Calu3 (cell line): ENCODE measurements at regions of chr16 and their contacts with region 1.

Region 1: DNA sequence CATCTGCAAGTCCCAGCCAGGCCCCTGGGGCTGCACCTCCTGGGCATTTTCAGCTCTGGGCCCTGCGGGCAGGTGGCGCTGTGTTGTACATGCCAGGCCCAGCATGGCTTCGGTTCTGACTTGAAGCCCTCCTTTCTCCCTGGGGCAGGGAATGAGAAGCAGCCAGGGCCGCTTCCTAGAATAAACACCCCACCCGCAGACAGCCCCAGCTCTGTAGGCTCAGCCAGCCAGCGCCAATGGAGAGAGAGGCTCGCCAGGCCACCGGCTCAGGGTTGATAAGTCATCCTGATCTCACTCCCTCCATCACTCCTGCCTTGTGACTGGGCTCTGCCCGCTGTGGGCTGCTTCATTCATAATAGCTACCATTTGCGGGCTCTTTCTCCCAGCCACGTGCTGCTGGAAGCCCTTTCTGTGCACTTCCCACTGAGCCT is 6.0 kb upstream of the GLIS2 start:
- DNase-seq: peak; percentile 91
- H3K4me3 Mint-ChIP-seq: no peak overlapping the region
- H3K27ac Mint-ChIP-seq: no peak overlapping the region
- H3K4me1 Mint-ChIP-seq: peaks cover 34% of the 10 kb centered on the region
- H3K27me3 Mint-ChIP-seq: no peaks in the 10 kb centered on the region
- CTCF ChIP-seq: peak; percentile 84

Region 2: GRCh38 chr16:4298761-4299522 is 10.9 kb before region 1 on chr16:
- CTCF ChIA-PET with region 1: interaction called, 10 read pairs
- intact Hi-C with region 1: no loop called
- DNase-seq: peak; percentile 97
- H3K4me3 Mint-ChIP-seq: peak overlapping the region; percentile 55
- H3K27ac Mint-ChIP-seq: peak overlapping the region; percentile 89
- H3K4me1 Mint-ChIP-seq: peaks cover 24% of the 10 kb centered on the region
- H3K27me3 Mint-ChIP-seq: no peaks in the 10 kb centered on the region
- CTCF ChIP-seq: no peak